ENCODE measurements at regions of chr11 and their contacts with region 1.

Region 1: GRCh38 chr11:46367244-46367915 is 14.1 kb upstream of the MDK start:
- DNase-seq: peak; percentile 67 to 83 (median 75)
- H3K4me3 ChIP-seq: no peak overlapping the region
- H3K4me3 Mint-ChIP-seq: peak overlapping the region in 2 of 7 donors; percentile 57 to 78
- H3K27ac ChIP-seq: no peak overlapping the region
- H3K27ac Mint-ChIP-seq: peak overlapping the region in 6 of 8 donors; percentile 19 to 80 (median 64)
- H3K4me1 ChIP-seq: peaks cover 33% of the 10 kb centered on the region
- H3K4me1 Mint-ChIP-seq: peaks cover 34 to 61% (median 35%) of the 10 kb centered on the region in 3 donors
- H3K27me3 ChIP-seq: no peaks in the 10 kb centered on the region
- H3K27me3 Mint-ChIP-seq: peaks cover 0 to 2% of the 10 kb centered on the region in 2 donors

Region 2: DNA sequence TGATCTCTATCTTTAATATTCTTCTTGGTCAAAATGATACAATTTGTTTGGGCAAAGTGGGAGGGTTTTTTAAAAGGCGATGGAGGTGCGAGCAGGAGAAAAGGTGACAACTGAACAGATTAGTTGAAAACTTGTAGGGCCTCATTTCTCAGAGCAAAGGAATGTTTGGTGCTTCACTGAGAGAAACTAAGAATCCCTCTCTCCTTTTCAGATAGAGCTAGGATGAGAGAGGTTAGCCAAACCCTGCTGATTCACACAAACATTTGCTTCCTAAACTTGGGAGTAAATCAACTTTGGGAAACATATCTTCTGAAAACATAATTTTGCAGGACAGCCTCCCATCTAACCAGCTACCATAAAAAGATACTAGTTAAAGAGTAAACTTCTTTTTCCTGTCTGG is 303.2 kb before region 1 on chr11:
- CTCF ChIA-PET with region 1: no interaction called
- POLR2A ChIA-PET with region 1: no interaction called
- DNase-seq: no peak
- H3K4me3 ChIP-seq: no peak overlapping the region
- H3K4me3 Mint-ChIP-seq: no peak overlapping the region
- H3K27ac ChIP-seq: no peak overlapping the region
- H3K27ac Mint-ChIP-seq: no peak overlapping the region
- H3K4me1 ChIP-seq: no peaks in the 10 kb centered on the region
- H3K4me1 Mint-ChIP-seq: peaks cover 9 to 26% (median 26%) of the 10 kb centered on the region in 3 donors
- H3K27me3 ChIP-seq: no peaks in the 10 kb centered on the region
- H3K27me3 Mint-ChIP-seq: no peaks in the 10 kb centered on the region

Region 3: DNA sequence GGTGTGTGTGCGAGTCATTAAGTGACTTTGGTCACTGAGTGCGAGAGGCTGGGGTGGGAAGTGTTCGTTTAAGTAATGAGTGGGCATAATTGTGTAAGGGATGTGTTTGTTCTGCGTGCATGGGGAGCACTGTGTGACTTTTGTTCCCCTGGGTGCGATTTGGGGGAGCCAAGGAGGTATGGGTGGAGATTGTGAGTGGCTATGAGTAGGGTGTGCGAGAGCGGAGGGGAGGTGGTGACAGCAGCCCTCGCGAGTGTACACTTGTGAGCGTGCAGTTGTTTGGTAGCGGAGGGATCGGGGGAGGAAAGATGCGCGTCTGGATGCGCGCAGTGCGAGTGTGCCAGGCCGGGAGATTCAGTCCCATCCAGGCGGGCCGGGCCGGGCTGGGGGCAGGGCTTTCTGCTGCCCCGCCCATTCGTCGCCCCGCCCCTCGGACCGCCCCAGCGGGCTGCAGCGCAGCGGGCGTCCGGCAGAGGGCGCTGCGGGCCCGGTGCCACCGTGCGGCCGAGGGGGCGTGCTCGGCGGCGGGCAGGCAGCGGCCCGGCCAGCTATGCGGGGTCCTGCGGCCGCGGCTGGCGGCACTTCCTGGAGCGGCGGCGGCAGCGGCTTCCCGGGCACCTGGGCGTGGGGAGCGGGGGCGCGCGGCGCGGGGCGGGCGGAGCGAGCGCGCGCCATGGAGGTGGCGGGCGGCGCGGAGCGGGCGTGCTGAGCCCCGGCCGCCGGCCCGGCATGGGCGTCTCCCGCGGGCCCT is 20.3 kb before region 1 on chr11 and contains the start of gene DGKZ:
- CTCF ChIA-PET with region 1: interaction called, 358 read pairs
- POLR2A ChIA-PET with region 1: interaction called, 9 read pairs
- DNase-seq: peak; percentile 87 to 97 (median 93)
- H3K4me3 ChIP-seq: peak within 1 kb of the TSS; percentile 95
- H3K4me3 Mint-ChIP-seq: peak within 1 kb of the TSS; percentile 89 to 98 (median 96)
- H3K27ac ChIP-seq: peak within 1 kb of the TSS; percentile 63
- H3K27ac Mint-ChIP-seq: peak within 1 kb of the TSS; percentile 70 to 98 (median 94)
- H3K4me1 ChIP-seq: peaks cover 80% of the 10 kb centered on the region
- H3K4me1 Mint-ChIP-seq: peaks cover 62 to 78% (median 69%) of the 10 kb centered on the region in 3 donors
- H3K27me3 ChIP-seq: no peaks in the 10 kb centered on the region
- H3K27me3 Mint-ChIP-seq: peaks cover 0 to 3% of the 10 kb centered on the region in 2 donors
- total RNA-seq, gene DGKZ: 85.8 to 87.2 TPM